ENCODE measurements at regions of chr22 and their contacts with region 1.

Region 1: DNA sequence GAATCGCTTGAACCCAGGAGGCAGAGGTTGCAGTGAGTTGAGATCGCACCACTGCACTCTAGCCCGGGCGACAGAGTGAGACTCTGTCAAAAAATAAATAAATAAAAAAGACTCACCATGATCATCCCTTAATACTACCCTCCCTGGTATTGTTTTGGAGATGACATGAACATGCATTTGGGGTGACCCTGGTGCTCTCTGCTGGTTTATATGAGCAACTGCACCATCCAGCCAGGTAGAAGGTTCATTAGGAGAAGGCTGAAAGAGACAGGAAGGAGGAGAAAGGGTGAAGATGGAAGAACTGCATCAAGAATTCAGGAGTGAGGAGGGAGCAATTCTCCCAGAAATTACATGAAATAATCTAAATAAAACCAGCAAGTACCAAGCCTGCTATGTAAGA is 37.8 kb downstream of the SLC5A1 start:
- DNase-seq: peak; percentile 55
- H3K4me3 Mint-ChIP-seq: no peak overlapping the region
- H3K27ac Mint-ChIP-seq: no peak overlapping the region
- H3K4me1 Mint-ChIP-seq: peaks cover 15% of the 10 kb centered on the region
- H3K27me3 Mint-ChIP-seq: peaks cover 3% of the 10 kb centered on the region
- CTCF ChIP-seq: peak; percentile 82

Region 2: GRCh38 chr22:31977141-31977841 is 103.6 kb before region 1 on chr22:
- CTCF ChIA-PET with region 1: interaction called, 46 read pairs
- intact Hi-C with region 1: loop called (anchors 1 kb)
- DNase-seq: peak; percentile 91
- H3K4me3 Mint-ChIP-seq: no peak overlapping the region
- H3K27ac Mint-ChIP-seq: peak overlapping the region; percentile 3
- H3K4me1 Mint-ChIP-seq: peaks cover 32% of the 10 kb centered on the region
- H3K27me3 Mint-ChIP-seq: no peaks in the 10 kb centered on the region
- CTCF ChIP-seq: peak; percentile 89

Region 3: DNA sequence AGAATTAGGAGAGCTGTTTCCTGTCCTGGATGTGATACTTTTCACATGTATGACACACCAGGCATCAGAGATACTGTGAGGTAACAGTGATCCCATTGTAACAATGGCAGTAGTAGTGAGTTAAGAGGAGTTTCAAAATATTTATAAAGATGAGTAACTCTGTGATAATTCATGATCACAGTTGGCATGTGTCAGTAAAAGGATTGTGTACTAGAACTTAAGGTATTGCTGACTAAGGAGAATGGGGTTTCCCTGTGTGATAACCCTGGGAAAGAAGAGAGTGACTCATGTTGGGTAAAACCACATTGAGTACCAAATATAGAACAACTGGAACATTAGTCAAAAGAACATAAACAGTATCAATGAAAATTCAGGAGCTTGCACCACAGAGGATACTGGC is 60.8 kb before region 1 on chr22:
- CTCF ChIA-PET with region 1: interaction called, 3 read pairs
- intact Hi-C with region 1: loop called (anchors 5 kb)
- DNase-seq: peak; percentile 6
- H3K4me3 Mint-ChIP-seq: no peak overlapping the region
- H3K27ac Mint-ChIP-seq: no peak overlapping the region
- H3K4me1 Mint-ChIP-seq: peaks cover 33% of the 10 kb centered on the region
- H3K27me3 Mint-ChIP-seq: no peaks in the 10 kb centered on the region
- CTCF ChIP-seq: no peak

Region 4: DNA sequence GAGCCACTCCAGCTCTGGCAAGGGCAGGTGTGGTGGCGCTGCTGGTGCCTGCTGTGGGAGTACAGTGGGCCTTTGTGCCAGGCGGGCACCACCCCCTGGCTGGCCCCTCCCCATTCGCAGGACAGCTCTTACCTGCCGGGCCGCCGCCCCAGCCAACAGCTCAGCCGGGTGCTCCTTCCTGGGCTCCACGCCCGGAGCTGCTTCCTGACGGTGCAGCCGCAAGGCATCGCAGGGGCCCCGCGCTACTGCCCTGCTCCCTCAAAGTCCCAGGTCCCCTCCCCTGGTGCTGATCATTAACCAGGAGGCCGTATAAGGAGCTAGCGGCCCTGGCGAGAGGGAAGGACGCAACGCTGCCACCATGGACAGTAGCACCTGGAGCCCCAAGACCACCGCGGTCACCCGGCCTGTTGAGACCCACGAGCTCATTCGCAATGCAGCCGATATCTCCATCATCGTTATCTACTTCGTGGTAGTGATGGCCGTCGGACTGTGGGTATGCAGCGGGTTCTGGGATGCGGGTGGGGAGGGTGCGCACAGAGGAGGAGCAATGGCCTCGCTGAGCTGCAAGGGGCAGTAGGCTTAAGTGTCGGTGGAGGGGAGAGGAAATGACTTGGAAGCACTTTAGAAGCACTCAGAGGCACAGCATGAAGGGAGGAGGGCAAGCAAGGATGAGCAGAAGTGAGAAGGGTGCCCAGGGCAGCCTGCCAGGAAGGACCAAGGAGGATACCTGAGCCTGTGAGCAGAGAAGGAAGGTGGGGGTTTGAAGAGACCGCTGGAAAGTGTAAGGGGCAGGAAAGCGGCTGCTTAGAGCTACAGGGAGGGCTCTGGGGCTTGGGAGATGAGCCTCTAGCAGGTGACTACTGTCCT is 37.7 kb before region 1 on chr22 and contains the start of gene SLC5A1:
- CTCF ChIA-PET with region 1: interaction called, 6 read pairs
- intact Hi-C with region 1: loop called (anchors 2 kb)
- DNase-seq: peak; percentile 95
- H3K4me3 Mint-ChIP-seq: peak within 1 kb of the TSS; percentile 35
- H3K27ac Mint-ChIP-seq: peak within 1 kb of the TSS; percentile 54
- H3K4me1 Mint-ChIP-seq: peaks cover 26% of the 10 kb centered on the region
- H3K27me3 Mint-ChIP-seq: peaks cover 7% of the 10 kb centered on the region
- CTCF ChIP-seq: no peak
- total RNA-seq, gene SLC5A1: 7.5 and 8.6 TPM in 2 replicates